ENCODE measurements at regions of chr11 and their contacts with region 1.

Region 1: DNA sequence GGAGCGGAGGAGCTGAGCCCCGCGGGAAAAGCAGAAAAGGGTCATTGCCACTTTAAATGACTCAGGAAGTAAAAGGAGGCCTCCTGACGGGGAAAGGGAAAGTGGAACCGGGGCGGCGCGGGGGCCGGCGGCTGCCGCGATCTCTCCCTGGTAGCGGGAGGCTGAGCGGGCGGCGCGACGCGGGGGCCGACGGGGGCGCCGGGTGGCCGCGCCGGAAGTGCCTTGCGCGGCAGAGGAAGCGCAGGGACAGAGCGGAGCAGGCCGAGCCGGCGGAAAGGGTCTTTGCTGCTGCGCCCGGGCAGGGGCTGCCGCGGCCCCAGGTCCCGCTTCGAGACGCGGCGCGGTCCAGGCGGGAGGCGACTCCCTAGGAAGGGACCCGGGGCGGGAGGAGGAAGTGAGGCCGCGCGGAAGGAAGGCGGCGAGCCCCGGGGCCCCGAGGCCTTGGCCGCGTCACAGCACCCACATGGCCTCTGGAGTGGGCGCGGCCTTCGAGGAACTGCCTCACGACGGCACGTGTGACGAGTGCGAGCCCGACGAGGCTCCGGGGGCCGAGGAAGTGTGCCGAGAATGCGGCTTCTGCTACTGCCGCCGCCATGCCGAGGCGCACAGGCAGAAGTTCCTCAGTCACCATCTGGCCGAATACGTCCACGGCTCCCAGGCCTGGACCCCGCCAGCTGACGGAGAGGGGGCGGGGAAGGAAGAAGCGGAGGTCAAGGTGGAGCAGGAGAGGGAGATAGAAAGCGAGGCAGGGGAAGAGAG is at the start of gene TRIM44:
- DNase-seq: peak; percentile 82
- H3K4me3 ChIP-seq: peak within 1 kb of the TSS; percentile 47 to 59 (median 59)
- H3K27ac ChIP-seq: peak within 1 kb of the TSS; percentile 67
- H3K4me1 ChIP-seq: peaks cover 29% of the 10 kb centered on the region
- H3K27me3 ChIP-seq: no peaks in the 10 kb centered on the region
- CTCF ChIP-seq: no peak
- POLR2A ChIP-seq: peak; percentile 45
- total RNA-seq, gene TRIM44: 62.3 and 72.0 TPM in 2 replicates

Region 2: DNA sequence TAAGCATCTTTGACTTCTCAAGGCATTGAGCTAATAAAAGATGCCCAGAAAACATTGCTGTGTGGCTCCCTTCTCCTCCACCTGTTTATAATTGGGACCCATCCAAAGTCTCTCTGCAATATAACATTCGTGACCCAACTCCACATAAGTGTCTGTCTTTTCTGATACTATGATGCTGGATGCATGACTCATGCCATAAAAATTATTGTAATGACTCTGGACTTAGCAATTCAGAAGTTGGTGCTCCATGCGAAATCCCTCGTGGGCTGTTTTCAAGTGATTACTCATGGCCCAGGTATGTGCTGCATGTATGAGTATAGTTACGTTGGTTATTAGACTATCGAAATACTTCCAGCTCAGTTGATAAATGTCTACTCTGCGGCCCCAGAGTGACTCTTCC is 32.9 kb before region 1 on chr11:
- CTCF ChIA-PET with region 1: interaction called, 6 read pairs
- POLR2A ChIA-PET with region 1: no interaction called
- dilution Hi-C with region 1: no loop called
- intact Hi-C with region 1: loop called (anchors 2 kb)
- DNase-seq: peak; percentile 93
- H3K4me3 ChIP-seq: no peak overlapping the region
- H3K27ac ChIP-seq: peak overlapping the region; percentile 65
- H3K4me1 ChIP-seq: peaks cover 29% of the 10 kb centered on the region
- H3K27me3 ChIP-seq: no peaks in the 10 kb centered on the region
- CTCF ChIP-seq: no peak
- POLR2A ChIP-seq: no peak

Region 3: GRCh38 chr11:35641171-35641897 is 21.5 kb before region 1 on chr11:
- CTCF ChIA-PET with region 1: interaction called, 7 read pairs
- POLR2A ChIA-PET with region 1: no interaction called
- dilution Hi-C with region 1: no loop called
- intact Hi-C with region 1: loop called (anchors 1 kb)
- DNase-seq: peak; percentile 64
- H3K4me3 ChIP-seq: no peak overlapping the region
- H3K27ac ChIP-seq: peak overlapping the region; percentile 59
- H3K4me1 ChIP-seq: peaks cover 15% of the 10 kb centered on the region
- H3K27me3 ChIP-seq: no peaks in the 10 kb centered on the region
- CTCF ChIP-seq: no peak
- POLR2A ChIP-seq: no peak

Region 4: GRCh38 chr11:35735903-35736302 is 73.1 kb after region 1 on chr11:
- CTCF ChIA-PET with region 1: interaction called, 5 read pairs
- POLR2A ChIA-PET with region 1: no interaction called
- dilution Hi-C with region 1: no loop called
- intact Hi-C with region 1: loop called (anchors 2 kb)
- DNase-seq: peak; percentile 78
- H3K4me3 ChIP-seq: no peak overlapping the region
- H3K27ac ChIP-seq: peak overlapping the region; percentile 73
- H3K4me1 ChIP-seq: peaks cover 25% of the 10 kb centered on the region
- H3K27me3 ChIP-seq: no peaks in the 10 kb centered on the region
- CTCF ChIP-seq: no peak
- POLR2A ChIP-seq: no peak

Region 5: DNA sequence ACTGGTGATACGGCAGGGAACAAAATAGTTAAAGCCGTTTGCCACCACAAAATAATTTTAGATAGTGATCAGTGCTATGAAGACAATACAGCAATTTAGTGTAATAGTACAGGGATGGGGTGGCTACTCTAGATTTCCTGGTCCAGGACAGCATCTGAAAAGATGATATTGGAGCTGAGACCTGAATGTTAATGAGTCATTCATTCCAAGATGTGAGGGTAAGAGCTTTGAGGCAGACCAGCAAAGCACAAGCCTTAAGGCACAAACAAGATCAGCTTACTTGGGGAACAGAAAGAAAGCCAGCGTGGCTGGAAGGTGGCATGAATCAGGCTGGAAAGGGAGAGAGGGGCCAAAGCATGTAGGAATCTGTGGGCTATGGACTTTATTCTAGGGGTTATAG is 132.0 kb after region 1 on chr11:
- CTCF ChIA-PET with region 1: no interaction called
- POLR2A ChIA-PET with region 1: no interaction called
- dilution Hi-C with region 1: no loop called
- intact Hi-C with region 1: loop called (anchors 2 kb)
- DNase-seq: no peak
- H3K4me3 ChIP-seq: no peak overlapping the region
- H3K27ac ChIP-seq: no peak overlapping the region
- H3K4me1 ChIP-seq: peaks cover 45% of the 10 kb centered on the region
- H3K27me3 ChIP-seq: no peaks in the 10 kb centered on the region
- CTCF ChIP-seq: no peak
- POLR2A ChIP-seq: no peak